BJ (cell line): ENCODE measurements at regions of chr19 and their contacts with region 1.

Region 1: GRCh38 chr19:13938301-13939064 is at the start of gene PODNL1:
- DNase-seq: peak; percentile 48
- H3K4me3 ChIP-seq: peak within 1 kb of the TSS; percentile 64
- H3K27me3 ChIP-seq: no peaks in the 10 kb centered on the region
- CTCF ChIP-seq: no peak
- polyA plus RNA-seq, gene PODNL1: 12.5 and 18.6 TPM in 2 replicates

Region 2: GRCh38 chr19:13952154-13953035 is 13.9 kb after region 1 on chr19 and contains the start of gene DCAF15:
- CTCF ChIA-PET with region 1: interaction called, 18 read pairs
- POLR2A ChIA-PET with region 1: interaction called, 6 read pairs
- DNase-seq: peak; percentile 98
- H3K4me3 ChIP-seq: peak within 1 kb of the TSS; percentile 91
- H3K27me3 ChIP-seq: no peaks in the 10 kb centered on the region
- CTCF ChIP-seq: no peak
- polyA plus RNA-seq, gene DCAF15: 11.0 and 20.0 TPM in 2 replicates

Region 3: GRCh38 chr19:14039181-14039580 is 100.7 kb after region 1 on chr19:
- CTCF ChIA-PET with region 1: no interaction called
- POLR2A ChIA-PET with region 1: no interaction called
- DNase-seq: no peak
- H3K4me3 ChIP-seq: no peak overlapping the region
- H3K27me3 ChIP-seq: no peaks in the 10 kb centered on the region
- CTCF ChIP-seq: no peak